ENCODE measurements at regions of chr1 and their contacts with region 1.

Region 1: GRCh38 chr1:84506002-84506728 is at the starts of genes GNG5 and SPATA1:
- DNase-seq: peak; percentile 95 to 99
- H3K4me3 ChIP-seq: peak within 1 kb of the TSS; percentile 88 to 94
- H3K27ac ChIP-seq: peak within 1 kb of the TSS; percentile 95 to 99
- H3K4me1 ChIP-seq: peaks cover 0 to 15% of the 10 kb centered on the region in 2 donors
- H3K27me3 ChIP-seq: no peaks in the 10 kb centered on the region
- CTCF ChIP-seq: no peak
- total RNA-seq, gene GNG5: 119 TPM
- total RNA-seq, gene SPATA1: not detected

Region 2: DNA sequence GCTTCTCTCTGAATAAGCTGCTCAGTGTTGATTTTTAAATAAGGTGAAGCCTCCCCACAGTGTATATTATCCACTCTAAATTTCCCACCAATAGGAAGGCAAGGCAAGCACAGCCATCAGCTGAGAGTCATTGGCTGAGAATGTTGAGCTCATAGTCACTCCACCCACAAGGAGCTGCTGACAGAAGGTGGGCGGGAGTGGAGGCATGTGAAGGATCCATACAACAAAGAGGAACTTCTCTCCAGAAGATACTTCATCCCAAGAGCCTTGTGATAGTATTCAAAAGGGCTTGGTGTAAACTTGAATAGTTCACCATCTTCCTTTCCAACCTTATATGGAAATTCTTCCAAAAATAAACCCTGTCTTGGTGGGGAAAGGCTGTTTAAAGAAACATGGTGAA is 161.9 kb before region 1 on chr1:
- intact Hi-C with region 1: no loop called
- DNase-seq: no peak
- H3K4me3 ChIP-seq: no peak overlapping the region
- H3K27ac ChIP-seq: no peak overlapping the region
- H3K4me1 ChIP-seq: no peaks in the 10 kb centered on the region
- H3K27me3 ChIP-seq: no peaks in the 10 kb centered on the region
- CTCF ChIP-seq: no peak

Region 3: DNA sequence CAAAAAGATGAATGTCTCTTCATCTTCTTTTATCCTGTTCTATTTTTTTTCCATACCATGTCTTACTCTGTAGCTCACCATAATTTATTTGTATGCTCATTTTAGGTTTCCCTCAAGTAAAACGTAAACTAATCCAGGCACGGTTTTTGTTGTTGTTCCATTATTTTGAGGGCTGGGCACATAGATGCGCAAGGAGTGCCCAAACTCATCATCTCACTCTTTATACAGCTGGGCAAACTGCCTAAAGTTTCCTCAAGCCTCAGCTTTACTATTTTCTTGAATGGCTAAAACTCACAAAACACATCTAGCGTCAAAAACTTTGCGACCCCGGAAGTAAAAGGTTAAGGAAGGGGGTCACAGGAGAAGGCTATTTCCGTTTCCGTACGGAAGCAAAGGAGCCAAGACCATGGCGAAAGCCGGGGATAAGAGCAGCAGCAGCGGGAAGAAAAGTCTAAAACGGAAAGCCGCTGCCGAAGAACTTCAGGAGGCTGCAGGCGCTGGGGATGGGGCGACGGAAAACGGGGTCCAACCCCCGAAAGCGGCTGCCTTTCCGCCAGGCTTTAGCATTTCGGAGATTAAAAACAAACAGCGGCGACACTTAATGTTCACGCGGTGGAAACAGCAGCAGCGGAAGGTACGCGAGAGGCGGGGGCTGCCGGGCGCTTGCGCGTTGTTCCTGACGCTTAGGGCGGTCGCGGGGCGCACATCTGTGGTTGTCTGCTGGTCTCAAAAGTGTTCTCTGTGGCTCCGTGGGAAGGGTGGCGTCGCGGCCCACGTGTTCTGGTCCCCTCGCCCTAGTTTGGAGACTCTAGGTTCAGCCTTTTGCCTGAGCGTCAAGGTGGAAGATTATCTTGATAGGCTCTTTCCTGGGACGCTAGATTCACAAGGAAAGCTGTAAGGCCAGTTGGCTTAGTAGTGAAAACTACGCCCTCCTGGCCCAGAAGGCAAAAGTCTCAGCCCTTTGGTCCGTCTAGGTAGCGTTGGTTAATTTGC is 27.0 kb before region 1 on chr1 and contains the start of gene RPF1:
- intact Hi-C with region 1: loop called (anchors 1 kb)
- DNase-seq: peak; percentile 16 to 84
- H3K4me3 ChIP-seq: peak within 1 kb of the TSS; percentile 80 to 81
- H3K27ac ChIP-seq: peak within 1 kb of the TSS; percentile 82 to 87
- H3K4me1 ChIP-seq: peaks cover 0 to 10% of the 10 kb centered on the region in 2 donors
- H3K27me3 ChIP-seq: no peaks in the 10 kb centered on the region
- CTCF ChIP-seq: peak in 2 of 3 experiments; percentile 5 to 8
- total RNA-seq, gene RPF1: 8.4 TPM

Region 4: DNA sequence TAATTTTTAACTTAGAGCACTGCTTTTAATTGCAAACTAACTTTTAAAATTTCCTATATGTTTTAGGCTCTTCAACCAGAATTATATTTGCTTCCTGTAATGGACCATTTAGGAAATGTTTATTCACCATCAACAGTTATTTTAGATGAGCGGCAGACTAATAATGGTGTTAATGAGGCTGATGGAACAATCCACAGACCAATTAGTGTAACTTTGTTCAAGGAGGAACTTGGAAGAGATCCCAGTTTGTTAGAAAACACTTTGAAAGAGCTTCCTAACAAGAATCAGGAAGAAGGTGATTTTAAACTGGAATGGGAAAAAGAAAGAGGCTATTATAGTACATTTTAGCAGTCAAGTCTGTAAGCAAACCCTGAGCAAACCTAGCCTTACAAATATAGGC is 19.6 kb after region 1 on chr1:
- intact Hi-C with region 1: no loop called
- DNase-seq: no peak
- H3K4me3 ChIP-seq: no peak overlapping the region
- H3K27ac ChIP-seq: no peak overlapping the region
- H3K4me1 ChIP-seq: no peaks in the 10 kb centered on the region
- H3K27me3 ChIP-seq: no peaks in the 10 kb centered on the region
- CTCF ChIP-seq: no peak

Region 5: DNA sequence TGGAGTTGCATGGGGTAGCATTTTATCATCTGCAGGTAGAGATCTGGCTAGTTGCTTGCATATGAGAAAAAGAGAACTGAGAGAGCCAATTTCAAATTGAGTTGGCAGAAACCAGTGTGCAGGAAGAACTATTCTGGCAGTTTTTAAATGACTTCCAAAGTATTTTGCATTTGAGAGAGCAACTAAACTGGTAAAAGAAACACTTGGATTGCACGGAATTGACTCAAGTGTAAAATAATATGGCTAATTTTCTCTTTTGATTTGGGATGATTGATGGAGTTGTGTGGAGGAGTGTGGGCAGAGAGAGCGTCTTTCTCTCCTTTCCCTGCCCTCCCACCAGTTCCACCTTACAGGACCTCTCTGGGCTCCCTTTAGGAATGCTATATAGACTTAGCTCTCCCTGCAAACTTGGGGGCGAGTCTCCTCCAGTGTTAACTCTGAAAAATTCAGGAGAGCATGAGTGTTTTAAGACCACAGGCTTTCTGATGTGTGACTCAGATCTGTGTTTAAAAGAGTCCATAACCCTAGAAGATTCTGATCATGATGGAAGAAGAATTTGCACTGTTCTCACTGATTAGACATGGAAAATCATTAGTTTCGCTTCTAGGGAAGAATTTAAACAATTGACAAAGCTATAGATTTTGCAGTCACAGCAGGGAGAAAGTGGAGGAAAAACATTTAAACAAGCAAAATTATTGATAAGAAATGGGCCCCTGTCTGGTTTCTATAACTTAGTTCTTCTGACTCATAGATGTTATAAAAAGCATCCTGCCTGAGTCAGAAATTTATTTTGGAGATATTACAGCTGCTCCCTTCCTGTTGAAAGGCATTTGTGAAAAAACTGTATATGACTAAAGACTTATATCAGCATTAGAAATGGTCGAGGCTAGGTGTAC is 92.9 kb after region 1 on chr1:
- intact Hi-C with region 1: loop called (anchors 1 kb)
- DNase-seq: no peak
- H3K4me3 ChIP-seq: peak overlapping the region in 1 of 2 donors; percentile 43
- H3K27ac ChIP-seq: peak overlapping the region; percentile 87 to 91
- H3K4me1 ChIP-seq: peaks cover 9 to 18% of the 10 kb centered on the region in 2 donors
- H3K27me3 ChIP-seq: no peaks in the 10 kb centered on the region
- CTCF ChIP-seq: no peak

Region 6: DNA sequence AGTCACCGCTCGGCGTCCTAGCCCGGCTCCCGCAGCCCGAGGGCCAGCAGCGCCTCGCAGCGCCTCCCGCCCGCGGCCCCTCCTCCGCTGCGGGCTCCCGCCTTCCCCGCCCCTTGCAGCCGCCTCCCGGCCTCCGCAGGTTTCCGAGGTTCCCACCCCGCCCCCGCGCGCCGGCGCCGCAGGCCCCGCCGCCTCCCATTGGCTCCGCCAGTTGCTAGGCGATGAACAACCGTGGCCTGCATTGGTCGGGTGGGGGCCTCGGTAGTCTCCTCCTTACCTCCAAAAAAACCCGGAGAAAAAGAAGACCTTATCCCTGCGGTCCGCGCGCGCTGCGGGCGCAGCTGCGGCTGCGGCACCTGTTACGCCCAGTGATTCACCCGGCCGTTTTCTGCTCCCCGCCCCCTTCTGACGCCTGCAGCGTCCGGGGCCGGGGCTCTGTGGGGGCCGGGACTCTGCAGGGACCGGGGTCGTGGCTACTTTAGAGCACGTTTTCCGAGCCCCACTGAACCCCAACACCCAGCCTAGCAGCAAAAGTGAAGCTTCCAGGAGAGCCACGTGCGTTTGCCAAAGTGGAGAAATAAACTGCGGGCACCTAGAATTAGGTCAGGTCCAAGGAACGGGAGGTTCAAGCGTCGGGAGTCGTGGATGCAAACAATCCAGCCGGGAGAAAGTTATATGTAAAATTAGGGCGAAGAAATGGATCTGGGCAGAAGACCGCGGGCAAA is 184.4 kb after region 1 on chr1 and contains the start of gene SSX2IP:
- intact Hi-C with region 1: loop called (anchors 1 kb)
- DNase-seq: peak; percentile 93 to 98
- H3K4me3 ChIP-seq: peak within 1 kb of the TSS; percentile 70 to 93
- H3K27ac ChIP-seq: peak within 1 kb of the TSS; percentile 70 to 80
- H3K4me1 ChIP-seq: peaks cover 0 to 13% of the 10 kb centered on the region in 2 donors
- H3K27me3 ChIP-seq: no peaks in the 10 kb centered on the region
- CTCF ChIP-seq: no peak
- total RNA-seq, gene SSX2IP: 2.3 TPM

Region 7: DNA sequence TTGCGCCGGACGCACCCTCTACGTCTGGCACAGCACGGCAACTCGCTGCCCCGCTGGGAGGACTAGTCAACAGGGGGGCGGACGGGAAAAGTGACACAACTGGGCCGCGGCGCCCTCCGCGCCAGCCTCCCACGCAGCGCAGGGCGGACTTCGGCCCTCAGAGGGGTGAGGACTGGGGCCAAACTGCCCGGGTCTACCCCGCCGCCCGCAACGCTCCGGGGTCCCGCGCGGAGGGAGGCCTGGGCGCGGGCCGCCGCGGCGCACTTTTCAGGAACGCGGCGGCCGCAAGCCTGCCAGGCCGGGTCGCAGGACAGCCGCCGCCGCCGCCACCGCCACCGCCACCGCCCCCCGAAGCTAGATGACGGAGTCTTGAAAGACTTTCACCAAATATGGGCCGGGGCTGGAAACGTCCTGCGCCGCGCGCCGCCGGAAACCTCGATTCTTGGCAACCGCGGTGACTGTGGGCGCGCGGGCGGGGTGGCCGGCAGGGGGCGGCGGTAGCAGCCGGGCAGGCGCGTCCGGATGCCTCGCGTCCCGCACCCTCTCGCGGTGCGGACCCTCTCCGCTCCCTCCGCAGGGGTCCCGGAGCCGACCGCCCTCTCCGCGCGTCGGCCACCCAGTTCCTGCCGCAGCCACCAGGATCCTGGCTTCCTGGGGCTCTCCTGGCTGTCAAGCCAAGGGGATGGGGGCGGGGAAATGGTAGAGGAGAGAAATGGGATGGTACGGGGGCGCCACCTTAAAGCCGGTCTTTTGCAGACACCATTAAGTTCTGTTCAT is 1070.7 kb after region 1 on chr1:
- intact Hi-C with region 1: loop called (anchors 5 kb)
- DNase-seq: peak; percentile 57 to 96
- H3K4me3 ChIP-seq: peak overlapping the region; percentile 62 to 88
- H3K27ac ChIP-seq: peak overlapping the region; percentile 92 to 96
- H3K4me1 ChIP-seq: peaks cover 5 to 23% of the 10 kb centered on the region in 2 donors
- H3K27me3 ChIP-seq: no peaks in the 10 kb centered on the region
- CTCF ChIP-seq: peak; percentile 59 to 93 (median 67)